Activated CD8-positive, alpha-beta T cell treated with anti-CD3 and anti-CD28 coated beads for 36 hours (primary cell): ENCODE measurements at regions of chr20 and their contacts with region 1.

Region 1: GRCh38 chr20:45812157-45813020 is at the start of gene UBE2C:
- DNase-seq: peak; percentile 98
- ATAC-seq: peak; percentile 100
- H3K4me3 Mint-ChIP-seq: peak within 1 kb of the TSS; percentile 98
- H3K27ac Mint-ChIP-seq: peak within 1 kb of the TSS; percentile 83
- H3K4me1 Mint-ChIP-seq: peaks cover 16% of the 10 kb centered on the region
- H3K27me3 Mint-ChIP-seq: no peaks in the 10 kb centered on the region
- CTCF ChIP-seq: no peak
- total RNA-seq, gene UBE2C: 149 to 151 TPM

Region 2: GRCh38 chr20:45752746-45753145 is 59.6 kb before region 1 on chr20:
- CTCF ChIA-PET with region 1: no interaction called
- POLR2A ChIA-PET with region 1: no interaction called
- intact Hi-C with region 1: no loop called
- DNase-seq: peak; percentile 54
- ATAC-seq: peak; percentile 79
- H3K4me3 Mint-ChIP-seq: no peak overlapping the region
- H3K27ac Mint-ChIP-seq: peak overlapping the region; percentile 53
- H3K4me1 Mint-ChIP-seq: peaks cover 21% of the 10 kb centered on the region
- H3K27me3 Mint-ChIP-seq: peaks cover 20% of the 10 kb centered on the region
- CTCF ChIP-seq: no peak

Region 3: DNA sequence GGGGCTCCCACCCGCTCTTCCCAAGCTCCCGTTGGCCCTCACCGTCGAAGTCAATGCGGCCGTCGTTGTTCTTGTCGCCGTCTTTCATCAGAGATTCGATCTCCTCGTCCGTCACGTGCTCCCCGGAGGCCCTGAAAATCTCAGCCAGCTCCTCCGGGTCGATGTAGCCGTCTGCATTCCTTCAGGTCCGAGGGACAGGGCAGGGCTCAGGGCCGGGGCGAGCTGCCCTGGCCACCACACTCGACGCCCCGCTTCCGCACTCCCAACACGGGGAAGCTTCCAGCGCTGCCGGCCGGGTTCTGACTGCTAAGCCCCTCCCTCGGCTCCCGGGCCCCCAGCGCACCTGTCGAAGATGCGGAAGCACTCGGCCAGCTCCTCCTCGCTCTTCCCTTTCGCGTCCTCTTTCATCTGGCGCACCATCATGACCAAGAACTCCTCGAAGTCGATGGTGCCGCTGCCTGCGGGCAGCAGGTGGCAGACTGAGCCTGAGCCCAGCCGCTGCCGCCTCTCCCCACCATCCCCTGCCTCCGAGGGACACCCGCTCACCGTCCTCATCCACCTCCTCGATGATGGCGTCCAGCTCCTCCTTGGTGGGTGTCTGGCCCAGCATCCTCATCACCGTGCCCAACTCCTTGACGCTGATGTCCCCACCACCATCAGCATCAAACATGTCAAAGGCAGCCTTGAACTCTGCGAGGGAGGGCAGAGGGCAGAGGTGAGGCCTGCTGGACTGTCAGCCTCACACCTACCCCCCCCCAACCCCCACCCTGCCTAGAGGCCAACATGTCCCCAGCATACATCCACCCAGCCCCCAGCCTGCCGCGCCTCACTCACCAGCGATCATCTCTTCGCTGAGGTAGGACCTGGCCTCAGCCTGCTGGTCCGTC is 11.8 kb after region 1 on chr20:
- CTCF ChIA-PET with region 1: interaction called, 9 read pairs
- POLR2A ChIA-PET with region 1: interaction called, 17 read pairs
- intact Hi-C with region 1: no loop called
- DNase-seq: peak; percentile 66
- ATAC-seq: peak; percentile 89
- H3K4me3 Mint-ChIP-seq: peak overlapping the region; percentile 47
- H3K27ac Mint-ChIP-seq: peak overlapping the region; percentile 62
- H3K4me1 Mint-ChIP-seq: peaks cover 12% of the 10 kb centered on the region
- H3K27me3 Mint-ChIP-seq: peaks cover 27% of the 10 kb centered on the region
- CTCF ChIP-seq: peak; percentile 36

Region 4: GRCh38 chr20:45857114-45857881 is 44.9 kb after region 1 on chr20 and contains the starts of genes ACOT8 and ZSWIM3:
- CTCF ChIA-PET with region 1: interaction called, 3 read pairs
- POLR2A ChIA-PET with region 1: interaction called, 8 read pairs
- intact Hi-C with region 1: loop called (anchors 5 kb)
- DNase-seq: peak; percentile 98
- ATAC-seq: peak; percentile 96
- H3K4me3 Mint-ChIP-seq: peak within 1 kb of the TSS; percentile 97
- H3K27ac Mint-ChIP-seq: peak within 1 kb of the TSS; percentile 99
- H3K4me1 Mint-ChIP-seq: peaks cover 42% of the 10 kb centered on the region
- H3K27me3 Mint-ChIP-seq: no peaks in the 10 kb centered on the region
- CTCF ChIP-seq: no peak
- total RNA-seq, gene ACOT8: 18.5 to 21.2 TPM
- total RNA-seq, gene ZSWIM3: 3.5 to 3.6 TPM

Region 5: DNA sequence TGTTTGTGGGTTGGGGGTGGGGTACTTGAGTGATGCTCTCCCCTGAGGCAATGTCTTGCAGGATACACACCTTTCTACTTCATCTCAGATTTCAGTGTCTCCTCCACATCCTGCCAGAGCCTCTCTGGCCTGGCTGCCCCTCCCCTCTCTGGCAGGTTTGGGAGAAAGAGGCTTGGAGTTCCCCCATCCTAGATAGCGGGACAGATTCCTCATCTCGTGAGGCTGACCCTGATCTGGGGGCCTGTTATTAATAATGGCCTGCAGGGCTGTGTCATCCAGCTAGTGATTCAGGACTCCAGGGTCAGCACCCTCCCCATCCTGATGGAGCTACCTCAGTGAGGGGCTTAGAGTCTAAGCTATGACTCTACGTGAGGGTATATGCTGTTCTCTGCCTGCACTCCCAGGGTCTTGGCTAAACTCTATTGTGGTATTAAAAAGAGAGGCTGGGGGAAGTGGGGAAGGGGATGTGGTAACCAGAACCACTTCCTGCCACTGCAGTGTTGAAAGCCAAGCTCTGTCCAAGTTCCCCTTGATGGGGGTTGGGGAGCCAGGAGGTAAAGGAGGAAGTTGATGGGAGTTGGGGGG is 192.6 kb after region 1 on chr20:
- CTCF ChIA-PET with region 1: no interaction called
- POLR2A ChIA-PET with region 1: no interaction called
- intact Hi-C with region 1: no loop called
- DNase-seq: peak; percentile 49
- ATAC-seq: peak; percentile 52
- H3K4me3 Mint-ChIP-seq: no peak overlapping the region
- H3K27ac Mint-ChIP-seq: no peak overlapping the region
- H3K4me1 Mint-ChIP-seq: peaks cover 61% of the 10 kb centered on the region
- H3K27me3 Mint-ChIP-seq: peaks cover 29% of the 10 kb centered on the region
- CTCF ChIP-seq: no peak